Sciatic nerve (tissue), 2 donors: ENCODE measurements at regions of chr15 and their contacts with region 1.

Region 1: GRCh38 chr15:83305704-83306291 is 21.3 kb upstream of the BNC1 start:
- DNase-seq: no peak
- ATAC-seq: no peak

Region 2: GRCh38 chr15:82789491-82789890 is 516.3 kb before region 1 on chr15:
- intact Hi-C with region 1: loop called (anchors 5 kb)
- DNase-seq: no peak
- ATAC-seq: no peak

Region 3: GRCh38 chr15:84979651-84980050 is 1673.9 kb after region 1 on chr15:
- intact Hi-C with region 1: loop called (anchors 10 kb)
- DNase-seq: peak; percentile 68
- ATAC-seq: no peak